Endothelial cell of umbilical vein (primary cell): ENCODE measurements at regions of chr7 and their contacts with region 1.

Region 1: DNA sequence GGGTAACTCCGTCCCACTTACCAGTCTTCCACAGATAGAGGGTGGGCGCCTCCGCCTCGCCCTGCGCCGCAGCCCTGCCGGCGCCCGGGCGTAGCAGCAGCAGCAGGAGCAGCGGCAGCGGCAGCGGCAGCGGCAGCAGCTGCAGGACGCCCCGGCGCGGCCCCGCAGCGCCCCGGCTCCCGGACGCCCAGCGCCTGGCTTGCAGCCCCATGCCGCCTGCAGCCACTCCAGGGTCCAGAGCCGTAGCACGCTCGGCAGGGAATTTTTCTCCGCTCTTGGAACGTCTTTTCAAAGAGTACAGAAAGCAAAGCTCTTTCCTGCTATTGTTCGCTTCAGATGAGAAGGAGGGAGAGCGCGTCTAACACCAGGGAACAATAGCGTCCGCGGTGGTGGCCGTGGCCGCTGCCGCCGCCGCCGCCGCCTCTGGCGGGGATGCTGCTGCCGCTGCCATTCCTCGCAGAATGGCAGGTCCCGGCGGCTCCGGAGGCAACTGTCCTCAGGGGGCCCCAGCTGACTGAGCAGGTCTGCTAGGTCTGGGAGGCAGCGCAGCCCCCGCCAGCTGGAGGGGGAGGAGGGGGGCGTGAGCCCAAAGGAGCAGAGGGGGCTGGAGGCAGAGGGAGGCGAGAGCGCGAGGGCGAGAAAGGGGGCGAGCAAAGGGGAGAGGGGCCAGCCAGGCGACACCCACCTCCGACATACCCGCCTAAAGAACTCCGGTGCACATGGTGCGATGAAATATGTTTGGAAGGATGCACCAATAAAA is at the start of gene THSD7A:
- DNase-seq: peak; percentile 81
- H3K4me3 ChIP-seq: peak within 1 kb of the TSS; percentile 55 to 89 (median 66)
- H3K27ac ChIP-seq: peak within 1 kb of the TSS; percentile 84
- H3K4me1 ChIP-seq: peaks cover 12% of the 10 kb centered on the region
- H3K27me3 ChIP-seq: no peaks in the 10 kb centered on the region
- CTCF ChIP-seq: peak in 1 of 2 donors; percentile 7
- POLR2A ChIP-seq: no peak
- total RNA-seq, gene THSD7A: 12.7 and 15.2 TPM in 2 replicates

Region 2: DNA sequence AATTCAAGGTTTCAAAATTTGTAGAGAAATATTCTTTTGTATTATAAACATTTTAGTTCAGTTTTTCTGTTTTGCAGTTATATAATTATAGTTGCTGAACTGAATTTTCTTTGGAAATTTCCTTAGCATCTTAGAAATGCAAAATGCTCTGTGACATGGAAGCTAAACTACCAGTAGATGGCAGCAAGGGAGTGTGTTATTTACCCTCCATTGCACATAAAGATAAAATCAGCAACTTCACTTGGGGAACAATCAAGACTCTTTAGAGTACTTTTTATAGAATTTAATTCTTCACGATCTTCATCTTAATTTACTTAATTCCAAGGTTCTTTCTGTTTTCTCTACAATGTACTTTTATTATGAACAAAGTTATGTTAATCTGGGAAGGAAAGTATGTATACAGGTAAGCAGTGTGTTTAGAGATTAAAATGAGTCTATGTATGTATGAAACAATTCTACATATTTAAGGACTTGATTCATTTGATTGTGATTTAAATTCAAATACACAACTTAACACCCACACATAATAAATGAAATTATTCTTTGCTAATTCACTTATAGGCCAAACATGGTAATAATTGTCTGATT is 404.1 kb before region 1 on chr7:
- CTCF ChIA-PET with region 1: interaction called, 23 read pairs
- POLR2A ChIA-PET with region 1: no interaction called
- dilution Hi-C with region 1: no loop called
- intact Hi-C with region 1: loop called (anchors 1 kb)
- DNase-seq: peak; percentile 86
- H3K4me3 ChIP-seq: no peak overlapping the region
- H3K27ac ChIP-seq: peak overlapping the region; percentile 1
- H3K4me1 ChIP-seq: peaks cover 5% of the 10 kb centered on the region
- H3K27me3 ChIP-seq: no peaks in the 10 kb centered on the region
- CTCF ChIP-seq: peak; percentile 43 to 48
- POLR2A ChIP-seq: no peak

Region 3: GRCh38 chr7:11592699-11593098 is 239.2 kb before region 1 on chr7:
- CTCF ChIA-PET with region 1: no interaction called
- POLR2A ChIA-PET with region 1: no interaction called
- dilution Hi-C with region 1: no loop called
- intact Hi-C with region 1: loop called (anchors 5 kb)
- DNase-seq: peak; percentile 58
- H3K4me3 ChIP-seq: no peak overlapping the region
- H3K27ac ChIP-seq: no peak overlapping the region
- H3K4me1 ChIP-seq: peaks cover 21% of the 10 kb centered on the region
- H3K27me3 ChIP-seq: no peaks in the 10 kb centered on the region
- CTCF ChIP-seq: no peak
- POLR2A ChIP-seq: no peak

Region 4: DNA sequence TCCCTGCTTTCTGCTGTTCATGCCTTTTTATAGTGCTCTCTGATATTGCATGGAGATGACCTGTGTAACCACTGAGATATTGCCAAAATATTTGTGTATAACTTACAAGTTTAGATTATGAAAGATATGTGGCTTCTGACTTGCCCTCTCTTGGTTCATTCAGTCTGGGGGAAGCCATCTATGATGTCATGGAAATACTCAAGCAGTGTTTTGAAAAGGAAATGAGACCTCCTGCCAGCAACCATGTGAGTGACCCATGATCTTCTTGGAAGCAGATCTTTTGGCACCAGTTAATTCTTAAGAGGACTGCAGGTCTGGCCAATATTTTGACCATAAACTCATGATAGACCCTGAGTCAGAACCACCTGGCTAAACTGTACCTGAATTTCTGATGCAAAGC is 182.9 kb before region 1 on chr7:
- CTCF ChIA-PET with region 1: interaction called, 5 read pairs
- POLR2A ChIA-PET with region 1: no interaction called
- dilution Hi-C with region 1: no loop called
- intact Hi-C with region 1: loop called (anchors 1 kb)
- DNase-seq: peak; percentile 95
- H3K4me3 ChIP-seq: no peak overlapping the region
- H3K27ac ChIP-seq: peak overlapping the region; percentile 46
- H3K4me1 ChIP-seq: peaks cover 22% of the 10 kb centered on the region
- H3K27me3 ChIP-seq: no peaks in the 10 kb centered on the region
- CTCF ChIP-seq: no peak
- POLR2A ChIP-seq: no peak

Region 5: DNA sequence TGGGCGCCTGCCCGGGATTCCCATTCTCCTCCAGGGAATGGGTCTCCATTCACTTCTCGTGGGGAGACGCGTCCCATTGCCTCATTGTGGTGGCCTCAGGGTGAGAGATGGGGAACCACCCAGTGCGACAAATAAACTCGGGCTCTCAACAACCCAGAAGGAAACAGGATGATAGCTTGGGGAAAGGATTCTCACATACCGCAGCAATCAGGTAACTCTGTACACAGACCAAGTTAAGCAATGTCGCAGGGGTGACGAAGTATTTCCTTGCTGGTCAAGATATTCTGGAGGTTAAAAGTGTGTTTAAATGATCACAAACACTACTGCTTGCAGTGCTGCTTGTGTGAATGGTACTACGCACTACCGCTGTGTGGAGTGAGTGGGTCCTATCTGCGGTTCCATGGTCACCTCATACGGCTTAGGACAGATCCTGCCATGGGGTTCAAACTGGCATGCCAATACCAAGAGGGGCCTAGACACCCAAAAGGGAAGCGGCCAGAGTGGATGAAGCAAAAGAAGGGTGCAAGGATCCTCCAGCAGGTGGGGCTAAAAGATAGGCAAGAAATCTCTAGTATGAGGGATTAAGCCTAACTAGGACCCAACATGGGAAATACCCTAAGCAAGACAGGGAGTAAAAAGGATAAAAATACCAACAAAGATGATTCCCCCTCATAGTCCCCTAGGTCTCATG is 235.4 kb after region 1 on chr7:
- CTCF ChIA-PET with region 1: interaction called, 7 read pairs
- POLR2A ChIA-PET with region 1: no interaction called
- dilution Hi-C with region 1: no loop called
- intact Hi-C with region 1: loop called (anchors 1 kb)
- DNase-seq: peak; percentile 60
- H3K4me3 ChIP-seq: no peak overlapping the region
- H3K27ac ChIP-seq: no peak overlapping the region
- H3K4me1 ChIP-seq: no peaks in the 10 kb centered on the region
- H3K27me3 ChIP-seq: no peaks in the 10 kb centered on the region
- CTCF ChIP-seq: peak; percentile 57 to 62
- POLR2A ChIP-seq: no peak

Region 6: DNA sequence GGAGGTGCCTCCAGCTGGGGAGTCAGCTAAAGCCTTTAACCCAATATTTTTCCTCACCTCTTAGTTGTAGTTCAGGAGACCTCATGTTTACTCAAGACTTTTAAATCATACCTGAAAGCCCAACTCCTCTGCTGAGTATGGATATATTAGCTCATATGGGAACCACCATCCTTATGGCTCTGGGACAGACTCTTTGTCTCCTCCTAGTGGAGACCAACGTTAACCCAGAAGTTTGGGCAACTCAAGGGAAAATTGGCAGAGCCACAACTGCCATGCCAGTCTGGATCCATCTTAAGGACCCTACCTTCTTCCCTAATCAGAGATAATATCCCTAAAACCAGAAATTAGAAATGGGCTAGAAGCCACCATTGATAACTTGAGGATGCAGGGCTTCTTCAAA is 460.0 kb after region 1 on chr7:
- CTCF ChIA-PET with region 1: interaction called, 15 read pairs
- POLR2A ChIA-PET with region 1: no interaction called
- dilution Hi-C with region 1: no loop called
- intact Hi-C with region 1: no loop called
- DNase-seq: peak; percentile 13
- H3K4me3 ChIP-seq: no peak overlapping the region
- H3K27ac ChIP-seq: no peak overlapping the region
- H3K4me1 ChIP-seq: no peaks in the 10 kb centered on the region
- H3K27me3 ChIP-seq: peaks cover 4% of the 10 kb centered on the region in 2 experiments
- CTCF ChIP-seq: peak; percentile 47 to 49
- POLR2A ChIP-seq: no peak

Region 7: GRCh38 chr7:12458520-12459131 is 626.7 kb after region 1 on chr7:
- CTCF ChIA-PET with region 1: interaction called, 12 read pairs
- POLR2A ChIA-PET with region 1: no interaction called
- dilution Hi-C with region 1: no loop called
- intact Hi-C with region 1: no loop called
- DNase-seq: peak; percentile 52
- H3K4me3 ChIP-seq: no peak overlapping the region
- H3K27ac ChIP-seq: no peak overlapping the region
- H3K4me1 ChIP-seq: no peaks in the 10 kb centered on the region
- H3K27me3 ChIP-seq: peaks cover 0 to 5% of the 10 kb centered on the region in 2 experiments
- CTCF ChIP-seq: peak; percentile 42 to 62
- POLR2A ChIP-seq: no peak